OCI-LY7 (cell line): ENCODE measurements at regions of chr13 and their contacts with region 1.

Region 1: DNA sequence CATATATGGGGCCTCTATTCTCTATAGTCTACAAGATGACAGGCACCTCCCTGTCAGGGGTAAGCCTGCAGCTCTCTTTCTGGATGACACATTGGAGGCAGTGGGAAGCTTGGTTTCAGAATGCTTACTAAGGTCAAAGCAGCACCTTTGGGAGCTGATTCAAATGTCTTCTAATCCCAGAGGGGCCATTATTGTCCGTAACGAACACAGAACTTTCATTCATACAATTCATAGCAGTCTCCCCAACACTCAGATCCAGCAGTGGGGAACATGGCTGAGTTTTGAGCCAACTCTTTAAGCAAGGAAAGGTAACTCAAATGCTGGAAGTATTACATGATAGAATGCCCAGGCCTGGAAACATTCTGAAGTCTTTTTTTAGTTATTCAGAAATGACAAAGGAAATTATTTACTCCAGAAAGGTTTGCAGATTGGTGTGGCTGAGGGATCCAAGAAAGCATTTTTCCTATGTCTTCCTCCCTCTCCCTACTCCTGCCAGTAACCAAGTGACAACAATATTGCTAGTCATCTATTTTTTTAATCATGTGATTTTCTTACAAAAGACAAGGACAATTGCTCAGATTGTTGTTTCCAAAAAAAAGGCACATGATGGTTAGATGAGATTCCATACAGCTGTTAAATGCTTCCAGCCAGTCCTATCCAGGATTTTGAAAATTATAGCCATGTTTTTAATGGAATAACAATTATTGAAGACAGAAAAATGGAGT is 118.7 kb downstream of the FOXO1 start:
- DNase-seq: no peak
- H3K4me3 ChIP-seq: no peak overlapping the region
- H3K27ac ChIP-seq: no peak overlapping the region
- H3K4me1 ChIP-seq: peaks cover 36% of the 10 kb centered on the region
- CTCF ChIP-seq: no peak

Region 2: GRCh38 chr13:40564342-40565001 is 16.7 kb after region 1 on chr13:
- CTCF ChIA-PET with region 1: interaction called, 3 read pairs
- POLR2A ChIA-PET with region 1: interaction called, 10 read pairs
- intact Hi-C with region 1: no loop called
- DNase-seq: peak; percentile 49
- H3K4me3 ChIP-seq: no peak overlapping the region
- H3K27ac ChIP-seq: peak overlapping the region; percentile 2
- H3K4me1 ChIP-seq: peaks cover 65% of the 10 kb centered on the region
- CTCF ChIP-seq: peak; percentile 57

Region 3: DNA sequence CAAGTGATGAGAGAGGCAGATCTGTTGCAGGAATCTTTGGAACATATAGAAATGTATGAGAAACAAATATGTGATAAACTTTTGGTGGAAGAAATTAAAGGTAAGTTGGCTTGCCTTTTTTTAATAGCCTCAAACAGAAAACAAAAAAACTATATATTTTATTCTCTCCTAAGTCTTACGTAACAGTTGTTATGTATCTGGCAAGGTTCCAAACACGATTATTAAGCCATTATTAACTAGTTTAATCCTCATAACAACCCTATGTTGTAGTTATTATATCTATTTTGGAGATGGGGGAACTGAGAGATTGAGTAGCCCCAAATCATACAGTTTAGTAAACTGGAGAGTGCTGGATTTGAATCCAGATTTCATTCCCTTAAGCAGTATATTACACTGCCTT is 778.0 kb after region 1 on chr13:
- CTCF ChIA-PET with region 1: no interaction called
- POLR2A ChIA-PET with region 1: no interaction called
- intact Hi-C with region 1: no loop called
- DNase-seq: no peak
- H3K4me3 ChIP-seq: no peak overlapping the region
- H3K27ac ChIP-seq: no peak overlapping the region
- H3K4me1 ChIP-seq: no peaks in the 10 kb centered on the region
- CTCF ChIP-seq: no peak